ENCODE measurements at regions of chr11 and their contacts with region 1.

Region 1: GRCh38 chr11:62787005-62787759 is at the start of gene TMEM179B:
- DNase-seq: peak; percentile 98
- H3K4me3 ChIP-seq: peak within 1 kb of the TSS; percentile 43 to 95 (median 67)
- H3K27ac ChIP-seq: peak within 1 kb of the TSS; percentile 70
- H3K4me1 ChIP-seq: peaks cover 21% of the 10 kb centered on the region
- H3K27me3 ChIP-seq: no peaks in the 10 kb centered on the region
- CTCF ChIP-seq: peak; percentile 52 to 71
- total RNA-seq, gene TMEM179B: 20.5 to 26.9 TPM

Region 2: DNA sequence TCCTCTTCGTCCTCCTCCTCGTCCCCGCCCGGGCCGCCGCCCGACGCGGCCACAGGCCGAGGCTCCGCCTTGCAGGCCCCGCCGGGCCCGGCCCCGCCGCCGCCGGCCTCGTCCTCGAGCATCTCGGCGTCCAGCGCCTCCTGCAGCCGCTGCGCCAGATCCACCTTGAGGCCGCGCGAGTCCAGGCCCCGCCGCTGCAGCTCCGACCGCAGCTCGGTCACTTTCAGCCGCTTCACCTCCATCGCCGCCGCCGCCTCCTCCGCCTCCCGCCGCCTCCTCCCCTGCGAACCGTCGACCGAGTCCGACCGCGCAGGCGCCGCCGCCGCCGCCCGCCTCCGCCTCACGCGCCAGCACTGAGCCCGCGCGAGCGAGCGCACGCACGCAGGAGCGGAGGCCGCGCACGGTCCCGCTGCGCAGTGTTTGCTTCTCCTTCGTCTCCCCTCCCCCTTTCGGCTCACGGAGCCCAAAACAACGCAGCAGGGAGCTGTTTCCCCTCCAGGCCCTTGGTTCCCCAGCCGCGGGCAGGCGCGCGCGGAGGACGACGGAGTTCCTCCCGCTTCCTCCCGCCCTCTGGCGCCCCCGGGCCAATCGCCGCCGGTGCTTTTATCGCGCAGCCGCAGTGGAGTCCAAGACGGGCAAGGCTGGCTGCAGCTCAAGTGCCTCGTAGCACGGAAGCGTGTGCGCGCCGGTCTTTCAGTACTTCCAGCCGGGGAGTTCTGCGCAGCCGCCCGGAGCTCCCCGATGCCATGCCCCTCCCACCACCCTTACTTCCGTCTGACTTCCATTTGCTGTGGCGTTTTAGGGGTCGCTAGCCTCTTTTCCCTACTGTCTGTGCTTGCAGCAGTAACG is 60.0 kb before region 1 on chr11 and contains the start of gene HNRNPUL2:
- CTCF ChIA-PET with region 1: interaction called, 9 read pairs
- dilution Hi-C with region 1: no loop called
- in situ Hi-C with region 1: no loop called
- intact Hi-C with region 1: loop called (anchors 1 kb)
- DNase-seq: peak; percentile 99
- H3K4me3 ChIP-seq: peak within 1 kb of the TSS; percentile 89 to 96 (median 90)
- H3K27ac ChIP-seq: peak within 1 kb of the TSS; percentile 82
- H3K4me1 ChIP-seq: peaks cover 4% of the 10 kb centered on the region
- H3K27me3 ChIP-seq: no peaks in the 10 kb centered on the region
- CTCF ChIP-seq: no peak
- total RNA-seq, gene HNRNPUL2: 7.7 to 50.4 TPM

Region 3: DNA sequence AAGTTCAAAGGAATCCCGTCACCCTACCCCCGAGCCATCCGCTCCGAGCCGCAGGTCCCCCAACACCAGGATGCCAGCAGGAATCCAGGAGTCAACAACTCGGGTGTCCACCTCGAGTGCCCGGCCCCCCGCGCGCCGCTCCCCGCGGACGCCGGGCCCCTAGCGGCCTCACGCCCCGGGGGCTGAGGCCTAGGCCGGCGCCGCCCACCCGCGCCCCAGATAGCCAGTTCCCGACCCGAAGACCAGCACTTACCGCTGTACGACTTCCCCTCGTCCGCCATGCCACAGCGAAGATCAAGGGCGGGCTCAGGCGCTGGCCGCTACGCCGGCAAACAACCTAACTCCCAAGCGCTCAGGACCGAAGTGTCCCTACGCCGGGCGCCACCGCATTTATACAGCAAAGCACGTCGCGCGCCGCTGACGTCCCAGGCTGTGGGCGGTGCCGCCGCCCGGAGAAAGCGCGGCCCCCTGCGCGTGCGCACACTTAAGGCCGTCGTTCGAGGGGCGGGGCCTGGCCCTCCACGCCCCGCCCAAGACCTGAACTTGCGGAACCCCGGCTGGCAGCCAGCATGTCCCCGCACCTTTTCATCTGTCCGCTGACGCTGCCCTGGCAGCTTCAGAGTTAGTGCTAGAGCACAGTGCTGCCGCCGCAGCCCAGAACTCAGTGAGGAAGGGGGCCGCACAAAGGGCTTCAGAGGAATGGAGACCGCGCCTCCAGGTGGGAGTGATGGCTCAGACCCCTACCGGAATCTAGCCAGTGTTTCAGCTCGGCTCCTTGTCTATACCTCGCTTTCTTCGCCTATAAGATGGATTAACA is 18.1 kb after region 1 on chr11 and contains the start of gene NXF1:
- CTCF ChIA-PET with region 1: interaction called, 8 read pairs
- dilution Hi-C with region 1: no loop called
- in situ Hi-C with region 1: no loop called
- intact Hi-C with region 1: loop called (anchors 1 kb)
- DNase-seq: peak; percentile 92
- H3K4me3 ChIP-seq: peak within 1 kb of the TSS; percentile 73 to 85 (median 76)
- H3K27ac ChIP-seq: peak within 1 kb of the TSS; percentile 77
- H3K4me1 ChIP-seq: peaks cover 12% of the 10 kb centered on the region
- H3K27me3 ChIP-seq: no peaks in the 10 kb centered on the region
- CTCF ChIP-seq: no peak
- total RNA-seq, gene NXF1: 24.3 to 43.4 TPM

Region 4: GRCh38 chr11:62860835-62861563 is 73.8 kb after region 1 on chr11:
- CTCF ChIA-PET with region 1: interaction called, 24 read pairs
- dilution Hi-C with region 1: no loop called
- in situ Hi-C with region 1: loop called in 1 of 2 experiments (anchors 5 kb)
- intact Hi-C with region 1: loop called (anchors 1 kb)
- DNase-seq: no peak
- H3K4me3 ChIP-seq: no peak overlapping the region
- H3K27ac ChIP-seq: no peak overlapping the region
- H3K4me1 ChIP-seq: peaks cover 7% of the 10 kb centered on the region
- H3K27me3 ChIP-seq: no peaks in the 10 kb centered on the region
- CTCF ChIP-seq: no peak

Region 5: GRCh38 chr11:63212742-63213141 is 425.6 kb after region 1 on chr11:
- CTCF ChIA-PET with region 1: no interaction called
- dilution Hi-C with region 1: no loop called
- in situ Hi-C with region 1: no loop called
- intact Hi-C with region 1: loop called (anchors 5 kb)
- DNase-seq: peak; percentile 9
- H3K4me3 ChIP-seq: no peak overlapping the region
- H3K27ac ChIP-seq: no peak overlapping the region
- H3K4me1 ChIP-seq: no peaks in the 10 kb centered on the region
- H3K27me3 ChIP-seq: no peaks in the 10 kb centered on the region
- CTCF ChIP-seq: peak; percentile 49 to 50